A549 (cell line): ENCODE measurements at regions of chr12 and their contacts with region 1.

Region 1: GRCh38 chr12:104381731-104382480 is 74.8 kb upstream of the CHST11 start:
- DNase-seq: peak; percentile 82 to 86
- ATAC-seq: peak; percentile 92 to 93
- H3K4me3 ChIP-seq: no peak overlapping the region
- H3K27ac ChIP-seq: peak overlapping the region; percentile 31 to 68; a peak in 5 of 6 replicates
- H3K4me1 ChIP-seq: peaks cover 22% of the 10 kb centered on the region
- CTCF ChIP-seq: peak; percentile 96
- EP300 ChIP-seq: no peak
- POLR2A ChIP-seq: no peak
- RAD21 ChIP-seq: peak; percentile 99

Region 2: DNA sequence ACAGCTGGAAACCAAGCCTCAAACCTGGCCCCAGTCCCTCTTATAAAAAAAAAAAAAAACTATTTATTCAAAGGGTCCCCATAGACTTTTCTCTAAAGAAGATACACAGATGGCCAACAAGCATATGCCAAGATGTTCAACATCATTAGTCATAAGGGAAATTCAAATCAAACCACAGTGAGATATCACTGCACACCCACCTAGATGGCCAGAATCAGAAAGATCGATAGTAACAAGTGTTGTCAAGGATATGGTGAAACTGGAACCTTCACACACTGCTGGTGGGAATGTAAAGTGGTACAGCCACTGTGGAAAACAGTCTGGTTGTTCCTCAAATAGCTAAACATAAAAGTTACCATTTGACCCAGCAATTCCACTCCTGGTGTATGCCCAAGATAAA is 238.0 kb before region 1 on chr12:
- CTCF ChIA-PET with region 1: no interaction called
- POLR2A ChIA-PET with region 1: no interaction called
- DNase-seq: no peak
- ATAC-seq: no peak
- H3K4me3 ChIP-seq: no peak overlapping the region
- H3K27ac ChIP-seq: no peak overlapping the region
- H3K4me1 ChIP-seq: peaks cover 2% of the 10 kb centered on the region
- CTCF ChIP-seq: no peak
- EP300 ChIP-seq: no peak
- POLR2A ChIP-seq: no peak
- RAD21 ChIP-seq: no peak

Region 3: DNA sequence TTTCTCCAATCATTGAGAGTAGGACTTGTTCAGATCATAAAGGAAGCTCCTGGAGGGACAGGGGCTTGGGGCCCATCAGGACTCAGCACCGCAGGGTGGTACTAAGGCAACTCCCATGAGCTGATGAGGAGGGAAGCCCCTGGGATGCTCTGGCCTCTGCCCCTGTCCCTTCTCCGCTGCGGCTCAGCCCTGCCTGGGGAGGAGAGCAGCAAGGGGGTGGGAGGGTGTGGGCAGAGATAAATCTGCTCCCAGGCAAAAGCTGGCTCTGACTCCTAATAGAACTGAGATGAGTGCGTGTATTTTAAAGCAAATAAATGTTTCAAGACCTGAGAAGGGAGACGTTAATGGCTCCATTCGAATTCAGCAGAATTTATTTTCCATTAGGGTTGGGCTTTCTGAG is 22.9 kb after region 1 on chr12:
- CTCF ChIA-PET with region 1: interaction called, 18 read pairs
- POLR2A ChIA-PET with region 1: no interaction called
- DNase-seq: no peak
- ATAC-seq: no peak
- H3K4me3 ChIP-seq: no peak overlapping the region
- H3K27ac ChIP-seq: no peak overlapping the region
- H3K4me1 ChIP-seq: peaks cover 23% of the 10 kb centered on the region
- CTCF ChIP-seq: no peak
- EP300 ChIP-seq: no peak
- POLR2A ChIP-seq: no peak
- RAD21 ChIP-seq: no peak

Region 4: GRCh38 chr12:104499668-104500332 is 117.9 kb after region 1 on chr12:
- CTCF ChIA-PET with region 1: interaction called, 10 read pairs
- POLR2A ChIA-PET with region 1: no interaction called
- DNase-seq: no peak
- ATAC-seq: no peak
- H3K4me3 ChIP-seq: no peak overlapping the region
- H3K27ac ChIP-seq: no peak overlapping the region
- H3K4me1 ChIP-seq: peaks cover 1% of the 10 kb centered on the region; the same call in 2 of the 3 replicates
- CTCF ChIP-seq: no peak
- EP300 ChIP-seq: no peak
- POLR2A ChIP-seq: no peak
- RAD21 ChIP-seq: no peak

Region 5: GRCh38 chr12:104865080-104865479 is 483.2 kb after region 1 on chr12:
- CTCF ChIA-PET with region 1: interaction called, 12 read pairs
- POLR2A ChIA-PET with region 1: no interaction called
- DNase-seq: no peak
- ATAC-seq: no peak
- H3K4me3 ChIP-seq: no peak overlapping the region
- H3K27ac ChIP-seq: no peak overlapping the region; a peak in 1 of 6 replicates
- H3K4me1 ChIP-seq: peaks cover 9% of the 10 kb centered on the region; the same call in 2 of the 3 replicates
- CTCF ChIP-seq: no peak
- EP300 ChIP-seq: no peak
- POLR2A ChIP-seq: no peak
- RAD21 ChIP-seq: no peak

Region 6: DNA sequence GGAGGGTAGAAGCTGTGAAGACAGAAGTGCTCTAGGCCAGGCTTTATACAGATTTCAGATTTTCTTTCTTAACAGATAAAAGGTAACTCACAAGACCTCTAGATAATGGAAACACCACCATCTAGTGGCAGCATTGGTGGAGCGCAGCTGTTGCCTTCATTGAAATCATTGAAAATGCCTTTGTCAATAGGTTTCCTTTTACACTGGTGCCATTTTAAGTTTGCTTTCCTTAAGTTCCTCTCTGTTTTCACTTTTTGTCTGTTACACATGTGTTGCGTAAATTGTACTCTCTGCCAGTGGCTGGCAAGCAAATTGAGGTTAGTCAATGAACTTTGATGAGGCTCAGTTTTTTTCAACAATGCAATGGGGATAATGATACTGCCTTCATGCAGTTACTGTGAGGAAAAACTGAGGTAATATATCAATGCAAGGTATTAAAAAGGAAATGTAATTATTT is 671.2 kb after region 1 on chr12:
- CTCF ChIA-PET with region 1: interaction called, 55 read pairs
- POLR2A ChIA-PET with region 1: no interaction called
- DNase-seq: peak; percentile 42 to 83
- ATAC-seq: peak; percentile 78 to 91; a peak in 5 of 6 replicates
- H3K4me3 ChIP-seq: no peak overlapping the region
- H3K27ac ChIP-seq: no peak overlapping the region
- H3K4me1 ChIP-seq: no peaks in the 10 kb centered on the region
- CTCF ChIP-seq: peak; percentile 93
- EP300 ChIP-seq: no peak
- POLR2A ChIP-seq: no peak
- RAD21 ChIP-seq: peak; percentile 94 to 97